Posterior cingulate gyrus (tissue), 11 donors: ENCODE measurements at regions of chr12 and their contacts with region 1.

Region 1: GRCh38 chr12:21697904-21698630 is 40.4 kb upstream of the LDHB start:
- DNase-seq: no peak

Region 2: DNA sequence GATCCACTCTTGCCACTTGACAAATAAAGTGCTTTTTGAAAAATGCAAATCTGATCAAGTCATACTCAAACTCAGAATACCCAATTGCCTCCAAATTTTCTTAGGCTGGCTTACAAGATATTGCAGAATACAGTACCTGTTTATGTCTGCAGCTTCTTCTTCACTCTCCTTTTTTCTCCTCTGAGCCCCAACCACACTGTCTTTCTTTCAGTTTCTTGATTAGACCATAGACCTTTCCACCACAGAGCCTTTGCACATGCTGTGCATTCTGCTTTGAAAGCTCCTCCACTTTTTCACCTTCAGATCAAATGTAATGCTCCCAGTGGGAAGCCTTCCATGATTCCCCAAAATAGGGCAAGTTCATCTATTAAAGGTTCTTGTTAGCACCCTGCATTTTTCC is 79.5 kb before region 1 on chr12:
- intact Hi-C with region 1: no loop called
- DNase-seq: no peak

Region 3: DNA sequence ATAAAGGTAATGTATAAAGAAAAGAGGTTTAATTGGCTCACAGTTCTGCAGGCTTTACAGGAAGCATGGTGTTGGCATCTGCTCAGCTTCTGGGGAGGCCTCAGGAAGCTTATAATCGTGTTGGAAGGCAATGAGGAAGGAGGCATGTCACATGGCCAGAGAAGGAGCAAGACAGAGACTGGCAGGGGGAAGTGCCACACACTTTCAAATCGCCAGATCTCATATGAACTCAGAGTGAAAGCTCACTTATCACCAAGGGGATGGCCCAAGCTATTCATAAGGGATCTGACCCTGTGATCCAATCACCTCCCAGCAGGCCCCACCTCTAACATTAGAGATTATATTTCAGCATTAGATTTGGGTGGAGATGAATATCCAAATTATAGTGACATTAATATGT is 66.7 kb before region 1 on chr12:
- intact Hi-C with region 1: no loop called
- DNase-seq: no peak

Region 4: GRCh38 chr12:21788089-21788983 is 90.3 kb after region 1 on chr12:
- intact Hi-C with region 1: no loop called
- DNase-seq: no peak

Region 5: GRCh38 chr12:21831791-21832344 is 133.8 kb after region 1 on chr12:
- intact Hi-C with region 1: no loop called
- DNase-seq: no peak

Region 6: GRCh38 chr12:21989819-21990412 is 291.8 kb after region 1 on chr12:
- intact Hi-C with region 1: loop called (anchors 5 kb)
- DNase-seq: no peak

Region 7: GRCh38 chr12:22018860-22019259 is 320.8 kb after region 1 on chr12:
- intact Hi-C with region 1: loop called (anchors 1 kb)
- DNase-seq: no peak

Region 8: DNA sequence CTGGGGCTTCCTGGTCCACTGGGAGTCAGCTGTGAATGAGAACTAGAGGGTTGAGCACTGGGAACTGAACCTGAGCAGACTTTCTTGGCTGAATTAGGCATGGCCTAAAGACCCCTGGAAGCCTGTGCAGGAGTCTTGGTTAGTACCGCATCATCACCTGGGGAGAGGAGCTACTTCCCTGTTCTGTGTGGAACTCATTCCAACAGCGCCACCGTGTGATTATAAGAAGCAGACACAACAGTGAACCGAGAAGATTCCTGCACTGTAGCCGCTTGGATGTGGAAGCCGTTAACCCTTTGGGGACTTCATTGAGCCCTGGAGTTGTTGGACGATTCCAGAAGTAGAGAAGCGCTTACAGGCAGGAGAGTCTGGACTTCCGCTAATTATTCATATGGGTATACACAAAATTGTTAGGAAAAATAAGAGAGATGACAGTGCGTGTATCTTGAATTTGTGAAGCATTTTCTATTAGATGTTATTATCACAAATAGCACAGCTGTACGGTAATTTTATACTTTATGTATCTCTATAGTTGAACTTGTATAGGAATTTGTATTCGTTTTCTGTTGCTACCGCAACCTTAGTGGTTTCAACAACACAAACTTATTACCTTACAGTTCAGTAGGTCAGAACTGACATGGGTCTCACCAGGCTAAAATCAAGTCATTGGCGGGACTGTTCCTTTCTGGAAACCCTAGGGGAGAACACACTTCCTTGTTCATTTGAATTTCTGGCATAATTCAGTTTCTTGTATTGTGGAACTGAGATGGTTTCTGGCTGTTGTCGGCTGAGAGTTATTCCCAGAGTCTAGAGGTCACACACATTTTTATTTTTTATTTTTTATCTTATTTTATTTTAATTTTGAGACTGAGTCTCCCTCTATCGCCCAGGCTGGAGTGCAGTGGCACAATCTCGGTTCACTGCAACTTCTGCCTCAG is 745.6 kb after region 1 on chr12:
- intact Hi-C with region 1: loop called (anchors 5 kb)
- DNase-seq: peak in 8 of 10 donors; percentile 18 to 88 (median 59)